Activated T-helper 1 cell treated with anti-CD3 and anti-CD28 coated beads, Interleukin-12 subunit alpha, Interleukin-12 subunit beta, Interleukin-2, Interleukin-4 antibody, amounts not matched to agents 30 ng/mL and 10 ng/mL and 1 ng/mL, durations not matched to agents 14 hours and 24 hours and 36 hours (primary cell): ENCODE measurements at regions of chr15 and their contacts with region 1.

Region 1: GRCh38 chr15:75023181-75023871 is at the start of gene PPCDC:
- DNase-seq: peak; percentile 93
- H3K4me3 Mint-ChIP-seq: peak within 1 kb of the TSS; percentile 96
- H3K27ac Mint-ChIP-seq: peak within 1 kb of the TSS; percentile 90
- H3K4me1 Mint-ChIP-seq: peaks cover 23% of the 10 kb centered on the region
- H3K27me3 Mint-ChIP-seq: no peaks in the 10 kb centered on the region
- total RNA-seq, gene PPCDC: 25.0 and 27.1 TPM in 2 replicates

Region 2: DNA sequence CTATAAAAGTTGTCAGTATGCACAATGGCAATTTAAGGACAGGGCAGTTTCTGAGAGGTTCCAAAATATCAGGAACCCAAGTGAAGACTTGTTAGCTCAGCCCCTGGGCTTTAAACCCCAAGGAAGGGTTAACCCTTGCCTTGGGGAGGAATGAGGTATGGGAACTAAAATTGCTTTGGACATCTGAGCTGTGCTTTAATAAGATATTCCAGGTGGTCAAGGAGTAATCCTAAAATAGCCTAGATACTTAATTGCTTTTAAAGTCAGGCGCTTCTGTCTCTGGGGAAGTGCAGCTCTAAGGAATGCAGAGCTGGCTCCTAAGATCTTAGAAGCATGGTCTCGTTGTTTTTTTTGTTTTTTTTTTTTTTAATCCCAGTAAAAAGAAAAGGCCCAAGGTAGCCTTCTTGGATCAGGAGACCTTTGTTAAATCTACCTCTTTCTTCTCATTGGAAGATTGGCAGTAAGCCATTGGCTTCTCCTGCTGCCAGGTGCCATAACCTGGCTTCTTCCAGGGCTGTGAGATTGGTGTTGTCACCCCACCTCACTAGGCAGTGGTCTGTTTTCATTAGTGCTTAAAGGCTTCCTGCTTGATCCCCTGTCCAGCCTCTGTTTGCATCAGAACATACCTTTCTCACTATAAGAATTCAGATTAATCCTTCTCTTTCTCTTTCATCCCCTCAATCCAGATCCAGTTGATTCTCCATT is 457.8 kb before region 1 on chr15:
- intact Hi-C with region 1: no loop called
- DNase-seq: no peak
- H3K4me3 Mint-ChIP-seq: no peak overlapping the region
- H3K27ac Mint-ChIP-seq: no peak overlapping the region
- H3K4me1 Mint-ChIP-seq: peaks cover 45% of the 10 kb centered on the region
- H3K27me3 Mint-ChIP-seq: no peaks in the 10 kb centered on the region

Region 3: DNA sequence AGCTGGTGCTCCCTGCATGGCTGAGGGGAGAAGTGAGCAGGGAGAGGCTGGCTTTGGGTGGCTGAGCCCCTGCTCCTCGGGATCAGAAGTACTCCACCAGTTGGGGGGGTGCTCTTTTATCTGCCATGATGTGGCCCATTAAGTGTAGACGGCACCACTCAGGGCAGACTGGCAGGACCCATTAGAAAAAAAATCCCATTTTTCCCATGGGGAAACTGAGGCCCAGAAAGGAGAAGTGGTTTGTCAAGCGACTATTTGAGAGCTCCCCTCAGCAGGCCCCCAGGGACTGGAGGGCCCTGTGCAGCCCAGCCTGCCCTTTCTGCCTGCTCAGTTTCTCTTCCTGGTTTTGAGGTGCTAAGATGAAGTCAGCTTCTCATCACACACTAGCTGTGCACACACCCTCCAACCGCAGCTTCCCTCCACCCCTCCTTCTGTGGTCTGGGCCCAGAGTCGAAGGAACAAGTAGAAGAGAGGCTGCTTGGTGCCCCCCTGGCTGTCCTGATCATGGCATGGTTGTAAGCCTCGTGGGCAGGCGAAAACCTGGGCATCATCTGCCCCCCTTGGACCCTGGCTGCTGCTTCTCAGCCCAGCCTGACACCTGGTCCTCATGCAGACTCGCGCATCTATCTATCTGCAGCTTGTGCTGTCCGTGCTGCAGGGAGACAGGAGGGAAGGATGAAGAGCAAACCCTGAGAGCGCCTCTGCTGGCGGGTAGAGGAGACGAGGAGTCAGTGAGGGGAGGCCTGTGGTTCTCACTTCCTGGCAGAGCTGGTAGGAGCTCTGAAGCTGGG is 235.9 kb before region 1 on chr15:
- intact Hi-C with region 1: loop called (anchors 5 kb)
- DNase-seq: peak; percentile 89
- H3K4me3 Mint-ChIP-seq: peak overlapping the region; percentile 86
- H3K27ac Mint-ChIP-seq: peak overlapping the region; percentile 98
- H3K4me1 Mint-ChIP-seq: peaks cover 65% of the 10 kb centered on the region
- H3K27me3 Mint-ChIP-seq: no peaks in the 10 kb centered on the region

Region 4: GRCh38 chr15:74995241-74995778 is 28.0 kb before region 1 on chr15 and contains the start of gene SCAMP5:
- intact Hi-C with region 1: loop called (anchors 1 kb)
- DNase-seq: peak; percentile 92
- H3K4me3 Mint-ChIP-seq: peak within 1 kb of the TSS; percentile 70
- H3K27ac Mint-ChIP-seq: no peak within 1 kb of the TSS
- H3K4me1 Mint-ChIP-seq: peaks cover 4% of the 10 kb centered on the region
- H3K27me3 Mint-ChIP-seq: peaks cover 33% of the 10 kb centered on the region
- total RNA-seq, gene SCAMP5: 2.0 and 3.5 TPM in 2 replicates

Region 5: GRCh38 chr15:75036314-75036649 is 13.0 kb after region 1 on chr15:
- intact Hi-C with region 1: no loop called
- DNase-seq: no peak
- H3K4me3 Mint-ChIP-seq: no peak overlapping the region
- H3K27ac Mint-ChIP-seq: peak overlapping the region; percentile 41
- H3K4me1 Mint-ChIP-seq: peaks cover 61% of the 10 kb centered on the region
- H3K27me3 Mint-ChIP-seq: no peaks in the 10 kb centered on the region

Region 6: DNA sequence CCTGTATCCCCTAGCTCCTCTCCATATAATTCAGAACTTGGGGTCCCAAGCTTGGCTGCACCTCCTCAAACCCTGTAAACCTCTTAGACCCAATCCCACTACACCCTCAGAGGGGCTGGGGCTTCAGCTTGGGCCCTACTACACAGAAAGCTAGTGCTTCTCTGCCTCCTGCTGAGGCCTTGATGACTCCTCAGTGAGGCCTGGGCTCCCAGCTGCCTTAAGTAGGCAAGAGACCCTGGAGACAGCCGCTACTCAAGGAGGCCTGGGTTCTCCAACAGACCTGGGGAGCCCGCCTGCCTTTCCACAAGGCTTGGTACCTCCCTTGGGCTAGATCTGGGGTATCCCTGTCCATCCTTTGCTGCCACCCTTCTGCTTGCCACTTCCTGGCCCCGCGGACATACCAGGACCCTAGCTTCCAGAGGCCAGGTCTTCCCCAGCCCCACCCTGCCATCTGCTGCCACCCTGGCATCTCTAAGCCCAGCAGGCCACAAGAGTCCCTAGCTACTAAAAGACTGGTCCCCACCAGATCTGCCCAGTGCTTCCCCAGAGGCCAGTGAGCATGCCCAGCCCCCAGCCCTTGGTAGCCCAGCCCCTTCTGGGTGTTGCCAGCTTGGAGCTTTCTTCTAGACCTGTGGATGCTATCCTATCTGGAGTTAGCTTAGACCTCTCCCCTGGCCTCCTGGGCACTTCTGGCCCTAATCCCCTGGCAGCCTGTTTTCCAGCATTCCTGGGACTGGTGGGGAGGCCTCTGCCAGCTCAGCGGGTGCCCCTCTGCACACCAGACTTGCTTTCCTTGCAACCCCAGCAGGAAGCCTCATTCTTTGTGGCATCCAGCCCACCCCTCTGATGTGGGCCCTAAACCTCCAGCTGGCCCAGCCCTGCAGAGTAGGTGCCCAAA is 192.0 kb after region 1 on chr15:
- intact Hi-C with region 1: no loop called
- DNase-seq: no peak
- H3K4me3 Mint-ChIP-seq: no peak overlapping the region
- H3K27ac Mint-ChIP-seq: no peak overlapping the region
- H3K4me1 Mint-ChIP-seq: no peaks in the 10 kb centered on the region
- H3K27me3 Mint-ChIP-seq: peaks cover 2% of the 10 kb centered on the region

Region 7: DNA sequence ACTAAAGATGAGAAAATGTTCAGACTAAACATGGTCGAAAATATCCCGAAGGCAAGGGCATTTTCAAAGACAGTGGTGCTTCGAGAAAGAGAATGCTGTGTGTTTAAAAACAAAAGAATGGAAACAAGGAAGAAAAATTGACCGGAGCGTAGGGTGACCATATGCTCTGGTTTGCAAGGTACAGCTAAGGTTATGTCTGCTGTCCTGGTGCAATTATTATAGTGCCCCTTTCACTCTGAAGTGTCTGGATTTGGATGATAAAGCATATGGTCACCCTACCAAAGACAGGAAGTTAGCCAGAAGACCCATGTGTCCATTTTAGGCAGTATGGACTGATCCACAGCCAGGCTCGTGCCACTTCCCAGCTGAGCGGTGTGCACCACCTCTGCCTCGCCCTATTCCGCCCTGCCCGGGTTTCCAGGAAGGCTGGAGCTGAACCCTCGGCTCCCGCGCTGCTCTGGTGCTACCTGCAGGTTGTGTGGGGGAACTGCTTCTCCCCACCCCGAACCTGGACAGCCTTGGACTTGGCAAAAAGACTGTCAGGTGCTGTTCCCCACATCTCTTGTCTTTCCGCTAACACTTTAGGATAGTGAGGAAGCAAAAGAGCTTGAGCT is 284.6 kb after region 1 on chr15:
- intact Hi-C with region 1: loop called (anchors 10 kb)
- DNase-seq: no peak
- H3K4me3 Mint-ChIP-seq: no peak overlapping the region
- H3K27ac Mint-ChIP-seq: no peak overlapping the region
- H3K4me1 Mint-ChIP-seq: no peaks in the 10 kb centered on the region
- H3K27me3 Mint-ChIP-seq: peaks cover 39% of the 10 kb centered on the region